ENCODE measurements at regions of chr5 and their contacts with region 1.

Region 1: GRCh38 chr5:139171779-139172404 is 26.3 kb downstream of the SIL1 start:
- DNase-seq: no peak
- H3K4me3 ChIP-seq: no peak overlapping the region
- H3K27ac ChIP-seq: no peak overlapping the region
- H3K4me1 ChIP-seq: no peaks in the 10 kb centered on the region
- H3K27me3 ChIP-seq: no peaks in the 10 kb centered on the region
- CTCF ChIP-seq: no peak
- EP300 ChIP-seq: no peak
- POLR2A ChIP-seq: no peak

Region 2: GRCh38 chr5:138999674-139000073 is 172.2 kb before region 1 on chr5:
- intact Hi-C with region 1: no loop called
- DNase-seq: peak in 2 of 5 donors; percentile 23 to 43
- H3K4me3 ChIP-seq: no peak overlapping the region
- H3K27ac ChIP-seq: no peak overlapping the region
- H3K4me1 ChIP-seq: no peaks in the 10 kb centered on the region
- H3K27me3 ChIP-seq: no peaks in the 10 kb centered on the region
- CTCF ChIP-seq: no peak
- EP300 ChIP-seq: no peak
- POLR2A ChIP-seq: no peak

Region 3: DNA sequence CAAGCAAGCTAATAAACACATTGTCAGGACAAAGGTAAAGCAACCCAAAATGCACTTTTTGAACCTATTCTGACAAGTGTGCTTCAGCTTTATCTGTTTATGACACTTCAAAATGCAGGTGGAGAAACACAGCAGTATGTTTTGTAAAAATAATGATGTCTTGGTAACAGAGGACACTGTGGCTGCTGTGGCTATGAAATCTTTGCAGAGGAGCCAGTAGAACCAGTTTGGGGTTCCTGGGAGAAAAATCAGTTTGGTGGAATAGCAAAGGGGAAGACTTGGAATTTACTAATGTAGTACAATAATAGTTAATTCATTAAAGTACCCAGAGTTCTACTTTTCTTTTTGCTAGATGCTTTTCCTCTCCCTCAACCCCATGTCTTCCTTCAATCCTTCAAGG is 14.3 kb before region 1 on chr5:
- intact Hi-C with region 1: loop called in 1 of 4 experiments (anchors 2 kb)
- DNase-seq: no peak
- H3K4me3 ChIP-seq: no peak overlapping the region
- H3K27ac ChIP-seq: no peak overlapping the region
- H3K4me1 ChIP-seq: peaks cover 2% of the 10 kb centered on the region
- H3K27me3 ChIP-seq: no peaks in the 10 kb centered on the region
- CTCF ChIP-seq: no peak
- EP300 ChIP-seq: no peak
- POLR2A ChIP-seq: no peak

Region 4: GRCh38 chr5:139426203-139426885 is 254.5 kb after region 1 on chr5:
- intact Hi-C with region 1: no loop called
- DNase-seq: no peak
- H3K4me3 ChIP-seq: no peak overlapping the region
- H3K27ac ChIP-seq: no peak overlapping the region
- H3K4me1 ChIP-seq: no peaks in the 10 kb centered on the region
- H3K27me3 ChIP-seq: no peaks in the 10 kb centered on the region
- CTCF ChIP-seq: no peak
- EP300 ChIP-seq: no peak
- POLR2A ChIP-seq: no peak

Measured in ovary (tissue), 10 donors.